Left ventricle myocardium inferior (tissue), 1 donor: ENCODE measurements at regions of chr3 and their contacts with region 1.

Region 1: DNA sequence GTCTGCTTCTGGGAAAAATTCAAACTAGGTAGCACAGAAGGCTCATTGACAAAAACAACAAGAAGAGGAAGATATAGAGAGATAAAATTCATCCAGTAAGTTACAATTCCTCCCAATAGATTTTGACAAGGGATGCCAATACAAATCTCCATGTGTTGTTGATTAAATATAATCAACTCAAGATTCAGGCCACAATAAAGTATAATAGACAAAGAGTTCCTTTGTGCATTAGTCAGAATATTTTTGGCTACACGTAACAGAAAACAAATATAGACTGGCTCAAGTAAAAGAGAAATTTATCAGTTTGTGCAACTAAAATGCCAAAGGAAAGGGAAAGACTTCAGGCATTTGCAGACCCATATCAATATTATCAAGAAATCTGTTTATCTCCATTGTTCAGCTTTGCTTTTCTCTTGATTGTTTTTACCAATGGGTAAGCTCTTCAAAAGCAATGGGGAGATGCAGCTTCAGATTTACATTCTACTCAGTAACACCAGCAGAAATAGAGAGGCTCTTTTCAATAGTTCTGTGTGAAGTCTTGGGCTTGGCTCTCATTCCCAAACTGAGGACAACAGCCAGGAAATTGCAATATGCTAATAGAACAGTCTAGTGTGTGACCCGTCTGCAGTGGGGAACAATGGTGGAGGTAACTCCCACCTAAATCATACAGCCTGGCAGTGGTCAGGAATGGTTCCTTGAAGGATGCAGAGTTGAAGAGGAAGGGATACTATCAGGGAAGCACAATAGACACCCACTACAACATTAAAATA is 77.6 kb upstream of the PROK2 start:
- DNase-seq: no peak
- H3K4me3 ChIP-seq: no peak overlapping the region
- H3K27ac ChIP-seq: no peak overlapping the region
- H3K4me1 ChIP-seq: no peaks in the 10 kb centered on the region
- H3K27me3 ChIP-seq: peaks cover 43% of the 10 kb centered on the region
- CTCF ChIP-seq: no peak

Region 2: GRCh38 chr3:71710906-71711494 is 151.6 kb before region 1 on chr3:
- intact Hi-C with region 1: loop called (anchors 10 kb)
- DNase-seq: no peak
- H3K4me3 ChIP-seq: no peak overlapping the region
- H3K27ac ChIP-seq: no peak overlapping the region
- H3K4me1 ChIP-seq: peaks cover 25% of the 10 kb centered on the region
- H3K27me3 ChIP-seq: no peaks in the 10 kb centered on the region
- CTCF ChIP-seq: peak; percentile 68

Region 3: DNA sequence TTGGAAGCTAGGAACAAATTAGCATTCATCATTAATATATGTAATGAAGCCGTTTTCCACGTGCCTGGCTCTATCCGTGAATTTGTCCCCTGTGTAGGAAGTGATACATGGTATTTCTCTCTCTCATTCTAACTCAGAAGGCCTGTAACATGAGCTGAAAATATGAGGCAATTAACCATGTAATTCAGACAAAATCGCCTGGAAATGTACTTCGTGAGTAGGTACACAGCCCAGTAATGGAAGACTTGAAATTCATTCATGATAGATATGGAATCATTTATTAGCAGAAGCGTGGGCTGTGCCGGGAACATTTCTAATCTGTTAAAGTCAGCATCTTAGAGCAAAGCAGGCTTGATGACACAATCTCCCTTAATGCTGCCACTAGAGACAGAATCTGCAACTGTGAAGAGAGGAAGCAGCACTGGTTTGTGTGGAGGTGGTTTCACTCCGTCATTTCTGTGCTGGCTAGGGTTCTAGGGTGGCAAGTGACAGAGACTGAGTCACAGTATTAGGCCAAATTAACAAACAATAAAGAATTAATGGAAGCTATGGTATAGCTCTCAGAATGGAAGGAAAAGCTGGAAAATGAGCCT is 147.4 kb after region 1 on chr3:
- intact Hi-C with region 1: no loop called
- DNase-seq: no peak
- H3K4me3 ChIP-seq: no peak overlapping the region
- H3K27ac ChIP-seq: no peak overlapping the region
- H3K4me1 ChIP-seq: no peaks in the 10 kb centered on the region
- H3K27me3 ChIP-seq: peaks cover 16% of the 10 kb centered on the region
- CTCF ChIP-seq: no peak